ENCODE measurements at regions of chr1 and their contacts with region 1.

Region 1: GRCh38 chr1:222713091-222713961 is 962 bp downstream of the BROX start:
- DNase-seq: peak; percentile 89 to 95 (median 90)
- H3K4me3 ChIP-seq: peak overlapping the region; percentile 84 to 100
- H3K4me3 Mint-ChIP-seq: peak overlapping the region; percentile 94 to 100 (median 98)
- H3K27ac ChIP-seq: peak overlapping the region; percentile 91
- H3K27ac Mint-ChIP-seq: peak overlapping the region; percentile 98 to 100 (median 100)
- H3K4me1 ChIP-seq: peaks cover 44% of the 10 kb centered on the region
- H3K4me1 Mint-ChIP-seq: peaks cover 29 to 76% (median 48%) of the 10 kb centered on the region in 4 donors
- H3K27me3 ChIP-seq: no peaks in the 10 kb centered on the region
- H3K27me3 Mint-ChIP-seq: no peaks in the 10 kb centered on the region

Region 2: DNA sequence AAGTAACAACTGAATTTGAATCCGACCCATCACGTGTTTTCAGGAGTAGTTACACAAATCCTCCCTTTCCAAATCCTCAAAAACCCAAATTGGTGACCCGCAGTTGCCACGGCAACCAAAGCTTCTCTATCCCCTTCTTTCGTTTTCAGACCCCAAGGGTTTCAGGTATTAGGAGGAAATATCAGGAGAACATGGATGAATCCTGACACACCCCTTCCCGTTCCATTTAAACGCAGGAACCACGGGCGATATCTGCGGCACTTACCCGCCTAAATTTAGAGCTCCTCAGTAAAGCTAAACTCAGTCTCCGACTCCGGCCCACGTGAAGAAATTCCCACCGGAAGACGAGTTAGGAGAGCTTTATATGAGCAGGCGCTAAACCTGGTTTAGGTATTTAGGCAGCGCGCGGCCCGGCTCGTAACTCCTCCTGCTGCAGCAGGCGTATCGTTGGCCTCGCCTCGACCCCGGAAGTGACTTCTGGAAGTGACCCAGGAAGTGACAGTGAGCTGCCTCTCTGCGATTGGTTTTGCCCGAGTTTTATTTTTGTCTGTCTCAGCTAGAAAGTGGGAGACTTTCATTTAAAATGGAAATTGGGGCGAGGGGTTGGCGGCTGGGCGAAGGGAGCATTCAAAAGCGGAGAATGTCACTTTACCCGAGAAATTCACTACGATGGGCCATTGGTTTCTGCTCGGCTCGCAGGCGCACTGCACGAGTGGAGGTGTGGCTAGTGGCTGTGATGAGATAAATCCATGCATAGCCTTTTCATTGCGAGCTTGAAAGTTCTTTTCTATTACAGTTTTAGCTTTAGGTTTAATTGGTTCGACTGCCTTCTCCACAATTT is 123.6 kb before region 1 on chr1 and contains the start of gene TAF1A:
- CTCF ChIA-PET with region 1: no interaction called
- POLR2A ChIA-PET with region 1: interaction called, 23 read pairs
- intact Hi-C with region 1: loop called (anchors 1 kb)
- DNase-seq: peak; percentile 85 to 94 (median 88)
- H3K4me3 ChIP-seq: peak within 1 kb of the TSS; percentile 78 to 85
- H3K4me3 Mint-ChIP-seq: peak within 1 kb of the TSS; percentile 95 to 99 (median 98)
- H3K27ac ChIP-seq: peak within 1 kb of the TSS; percentile 76
- H3K27ac Mint-ChIP-seq: peak within 1 kb of the TSS; percentile 92 to 100 (median 99)
- H3K4me1 ChIP-seq: peaks cover 27% of the 10 kb centered on the region
- H3K4me1 Mint-ChIP-seq: peaks cover 32 to 52% (median 43%) of the 10 kb centered on the region in 4 donors
- H3K27me3 ChIP-seq: no peaks in the 10 kb centered on the region
- H3K27me3 Mint-ChIP-seq: no peaks in the 10 kb centered on the region
- total RNA-seq, gene TAF1A: 16.4 to 17.8 TPM

Region 3: DNA sequence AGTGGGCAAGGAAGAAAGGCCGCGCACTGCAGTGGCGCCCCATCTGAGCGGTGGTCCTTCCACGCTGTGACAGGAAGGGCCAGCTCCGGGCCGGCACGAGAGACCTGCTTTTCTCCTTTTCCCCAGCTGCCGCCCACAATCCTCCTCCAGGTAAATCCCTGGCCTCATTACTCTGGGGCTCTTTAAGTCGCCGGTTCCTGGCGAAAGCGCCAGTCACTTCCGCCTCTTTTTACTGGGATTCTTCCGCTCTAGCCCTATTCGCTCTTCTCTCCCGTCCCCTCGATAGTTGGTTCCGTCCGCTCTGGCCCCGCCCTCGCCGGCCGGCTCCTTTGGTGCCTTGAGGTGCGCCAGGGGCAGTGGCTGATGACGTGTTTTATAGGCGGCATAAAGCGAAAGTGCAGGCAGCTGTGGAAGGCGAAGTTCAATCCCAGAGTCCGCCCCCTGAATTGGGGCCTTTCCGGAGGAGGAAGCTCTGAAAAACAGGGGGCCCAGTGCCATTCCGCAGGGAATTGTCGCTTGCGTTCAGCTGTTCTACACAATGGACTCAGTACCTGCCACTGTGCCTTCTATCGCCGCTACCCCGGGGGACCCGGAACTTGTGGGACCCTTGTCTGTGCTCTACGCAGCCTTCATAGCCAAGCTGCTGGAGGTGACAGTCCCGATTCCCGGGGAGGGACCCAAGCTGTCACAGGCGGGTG is 69.2 kb before region 1 on chr1:
- CTCF ChIA-PET with region 1: interaction called, 4 read pairs
- POLR2A ChIA-PET with region 1: interaction called, 76 read pairs
- intact Hi-C with region 1: loop called (anchors 1 kb)
- DNase-seq: peak; percentile 96 to 99 (median 97)
- H3K4me3 ChIP-seq: peak overlapping the region; percentile 94 to 100
- H3K4me3 Mint-ChIP-seq: peak overlapping the region; percentile 90 to 100 (median 100)
- H3K27ac ChIP-seq: peak overlapping the region; percentile 98
- H3K27ac Mint-ChIP-seq: peak overlapping the region; percentile 97 to 100 (median 99)
- H3K4me1 ChIP-seq: peaks cover 32% of the 10 kb centered on the region
- H3K4me1 Mint-ChIP-seq: peaks cover 16 to 36% (median 28%) of the 10 kb centered on the region in 4 donors
- H3K27me3 ChIP-seq: no peaks in the 10 kb centered on the region
- H3K27me3 Mint-ChIP-seq: no peaks in the 10 kb centered on the region

Region 4: DNA sequence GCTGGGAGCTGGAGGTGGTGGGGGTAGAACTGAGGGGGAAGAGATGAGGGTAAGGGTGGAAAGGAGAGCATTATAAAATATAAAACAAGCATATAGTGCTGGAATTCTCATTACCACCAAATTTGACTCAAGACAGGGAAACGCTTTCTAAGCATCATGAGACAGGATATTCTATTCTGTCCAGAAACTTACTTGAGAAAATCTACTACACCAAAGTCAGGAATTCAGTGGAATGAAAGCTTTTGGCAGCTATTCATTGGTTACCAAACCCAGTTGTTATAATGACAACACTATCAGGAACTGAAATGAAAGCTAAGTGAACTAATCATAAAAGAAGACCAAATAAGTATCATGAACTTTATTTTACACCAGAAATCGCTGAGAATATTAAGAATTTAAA is 15.5 kb before region 1 on chr1:
- CTCF ChIA-PET with region 1: interaction called, 3 read pairs
- POLR2A ChIA-PET with region 1: interaction called, 22 read pairs
- intact Hi-C with region 1: no loop called
- DNase-seq: no peak
- H3K4me3 ChIP-seq: no peak overlapping the region
- H3K4me3 Mint-ChIP-seq: no peak overlapping the region
- H3K27ac ChIP-seq: no peak overlapping the region
- H3K27ac Mint-ChIP-seq: peak overlapping the region in 1 of 7 donors; percentile 19
- H3K4me1 ChIP-seq: peaks cover 8% of the 10 kb centered on the region
- H3K4me1 Mint-ChIP-seq: peaks cover 10 to 26% (median 17%) of the 10 kb centered on the region in 4 donors
- H3K27me3 ChIP-seq: no peaks in the 10 kb centered on the region
- H3K27me3 Mint-ChIP-seq: no peaks in the 10 kb centered on the region

Region 5: GRCh38 chr1:222767152-222767571 is 53.8 kb after region 1 on chr1:
- CTCF ChIA-PET with region 1: no interaction called
- POLR2A ChIA-PET with region 1: no interaction called
- intact Hi-C with region 1: no loop called
- DNase-seq: no peak
- H3K4me3 ChIP-seq: no peak overlapping the region
- H3K4me3 Mint-ChIP-seq: no peak overlapping the region
- H3K27ac ChIP-seq: no peak overlapping the region
- H3K27ac Mint-ChIP-seq: no peak overlapping the region
- H3K4me1 ChIP-seq: no peaks in the 10 kb centered on the region
- H3K4me1 Mint-ChIP-seq: no peaks in the 10 kb centered on the region
- H3K27me3 ChIP-seq: no peaks in the 10 kb centered on the region
- H3K27me3 Mint-ChIP-seq: peaks cover 15 to 18% of the 10 kb centered on the region in 2 donors

Region 6: GRCh38 chr1:222814536-222815439 is 101.5 kb after region 1 on chr1 and contains the start of gene DISP1:
- CTCF ChIA-PET with region 1: no interaction called
- POLR2A ChIA-PET with region 1: no interaction called
- intact Hi-C with region 1: loop called (anchors 1 kb)
- DNase-seq: peak; percentile 67 to 74 (median 68)
- H3K4me3 ChIP-seq: peak within 1 kb of the TSS; percentile 40 to 75
- H3K4me3 Mint-ChIP-seq: peak within 1 kb of the TSS; percentile 91 to 97 (median 94)
- H3K27ac ChIP-seq: peak within 1 kb of the TSS; percentile 52
- H3K27ac Mint-ChIP-seq: peak within 1 kb of the TSS; percentile 55 to 95 (median 93)
- H3K4me1 ChIP-seq: peaks cover 18% of the 10 kb centered on the region
- H3K4me1 Mint-ChIP-seq: peaks cover 18 to 30% (median 24%) of the 10 kb centered on the region in 4 donors
- H3K27me3 ChIP-seq: no peaks in the 10 kb centered on the region
- H3K27me3 Mint-ChIP-seq: peaks cover 2% of the 10 kb centered on the region in 2 donors
- total RNA-seq, gene DISP1: 3.9 to 4.2 TPM

Region 7: GRCh38 chr1:222928212-222928611 is 214.9 kb after region 1 on chr1:
- CTCF ChIA-PET with region 1: no interaction called
- POLR2A ChIA-PET with region 1: no interaction called
- intact Hi-C with region 1: no loop called
- DNase-seq: no peak
- H3K4me3 ChIP-seq: no peak overlapping the region
- H3K4me3 Mint-ChIP-seq: no peak overlapping the region
- H3K27ac ChIP-seq: no peak overlapping the region
- H3K27ac Mint-ChIP-seq: no peak overlapping the region
- H3K4me1 ChIP-seq: no peaks in the 10 kb centered on the region
- H3K4me1 Mint-ChIP-seq: no peaks in the 10 kb centered on the region
- H3K27me3 ChIP-seq: no peaks in the 10 kb centered on the region
- H3K27me3 Mint-ChIP-seq: no peaks in the 10 kb centered on the region

Region 8: DNA sequence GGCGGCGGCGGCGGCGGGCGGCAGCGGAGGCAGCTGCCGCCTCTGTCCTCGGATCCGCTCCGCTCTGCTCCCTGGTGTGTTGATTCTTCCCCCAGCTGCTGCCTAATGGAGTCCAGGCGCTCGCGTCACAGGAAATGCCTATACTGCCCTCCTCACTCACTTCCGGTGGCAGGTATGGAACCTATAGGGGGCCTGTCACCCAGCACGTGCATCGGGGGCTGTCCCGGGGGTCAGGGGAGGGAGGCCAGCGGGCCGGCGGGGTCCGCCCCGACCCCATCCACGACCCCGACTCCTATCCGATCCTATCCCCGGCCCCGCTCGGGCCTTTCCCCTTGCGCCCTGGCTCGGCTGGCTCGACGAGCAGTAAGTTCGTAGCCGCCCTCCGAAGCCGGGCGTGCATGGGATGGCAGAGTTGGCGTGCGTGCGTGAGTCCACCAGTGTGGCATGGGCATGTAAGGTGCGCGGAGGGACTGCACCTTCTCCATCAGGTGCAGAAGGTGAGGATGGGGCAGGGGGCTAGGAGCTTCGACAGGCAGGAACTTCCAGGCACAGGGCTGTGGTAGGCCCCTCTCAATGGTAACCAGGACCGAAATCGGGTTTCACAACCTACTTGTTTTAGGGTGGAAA is 1721.5 kb after region 1 on chr1 and contains the start of gene WDR26:
- CTCF ChIA-PET with region 1: no interaction called
- POLR2A ChIA-PET with region 1: no interaction called
- intact Hi-C with region 1: loop called (anchors 2 kb)
- DNase-seq: peak; percentile 85 to 93 (median 87)
- H3K4me3 ChIP-seq: peak within 1 kb of the TSS; percentile 73 to 96
- H3K4me3 Mint-ChIP-seq: peak within 1 kb of the TSS; percentile 93 to 97 (median 97)
- H3K27ac ChIP-seq: peak within 1 kb of the TSS; percentile 94
- H3K27ac Mint-ChIP-seq: peak within 1 kb of the TSS; percentile 97 to 99 (median 99)
- H3K4me1 ChIP-seq: peaks cover 57% of the 10 kb centered on the region
- H3K4me1 Mint-ChIP-seq: peaks cover 39 to 69% (median 49%) of the 10 kb centered on the region in 4 donors
- H3K27me3 ChIP-seq: no peaks in the 10 kb centered on the region
- H3K27me3 Mint-ChIP-seq: no peaks in the 10 kb centered on the region
- total RNA-seq, gene WDR26: 121 to 123 TPM